RWPE1 (cell line): ENCODE measurements at regions of chr3 and their contacts with region 1.

Region 1: GRCh38 chr3:122322095-122323075 is 2.7 kb upstream of the CSTA start:
- DNase-seq: no peak
- H3K27ac ChIP-seq: no peak overlapping the region
- CTCF ChIP-seq: no peak

Region 2: DNA sequence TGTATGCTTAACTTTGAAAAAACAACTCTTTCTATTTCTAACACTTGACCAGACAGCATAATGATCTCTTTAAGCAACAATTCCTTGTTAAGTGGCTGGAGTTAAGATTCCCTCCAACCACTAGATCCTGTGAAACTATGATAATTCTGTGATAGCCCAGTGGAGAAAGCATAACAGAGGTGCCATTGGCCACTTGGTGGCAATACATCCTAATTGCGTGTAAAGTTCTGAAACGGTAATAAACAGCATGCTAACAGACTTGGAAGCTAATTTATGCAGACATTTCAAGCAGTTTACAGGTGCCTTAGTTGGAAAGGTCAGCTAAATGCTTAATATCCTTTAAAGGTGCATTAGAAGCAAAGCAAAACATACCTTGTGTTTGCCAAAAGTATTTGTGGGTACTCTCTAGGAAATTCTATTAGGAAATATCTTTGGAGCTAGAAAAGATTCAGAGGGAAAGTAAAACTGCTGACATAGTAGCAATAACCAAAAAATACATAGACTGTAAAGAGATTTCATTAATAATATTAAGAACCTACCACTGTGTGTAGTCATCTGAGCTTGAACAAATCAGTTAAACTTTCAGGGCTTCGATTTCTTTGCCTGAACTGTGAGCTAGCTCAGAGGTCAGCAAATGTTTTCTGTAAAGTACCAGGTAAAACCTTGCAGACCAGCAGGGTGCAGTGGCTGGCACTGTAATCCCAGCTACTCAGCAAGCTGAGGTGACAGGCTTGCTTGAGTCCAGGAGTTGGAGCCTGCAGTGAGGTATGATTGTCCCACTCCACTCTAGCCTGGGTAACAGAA is 16.4 kb before region 1 on chr3:
- CTCF ChIA-PET with region 1: interaction called, 12 read pairs
- POLR2A ChIA-PET with region 1: interaction called, 5 read pairs
- DNase-seq: peak; percentile 48
- H3K27ac ChIP-seq: no peak overlapping the region
- CTCF ChIP-seq: peak; percentile 59

Region 3: DNA sequence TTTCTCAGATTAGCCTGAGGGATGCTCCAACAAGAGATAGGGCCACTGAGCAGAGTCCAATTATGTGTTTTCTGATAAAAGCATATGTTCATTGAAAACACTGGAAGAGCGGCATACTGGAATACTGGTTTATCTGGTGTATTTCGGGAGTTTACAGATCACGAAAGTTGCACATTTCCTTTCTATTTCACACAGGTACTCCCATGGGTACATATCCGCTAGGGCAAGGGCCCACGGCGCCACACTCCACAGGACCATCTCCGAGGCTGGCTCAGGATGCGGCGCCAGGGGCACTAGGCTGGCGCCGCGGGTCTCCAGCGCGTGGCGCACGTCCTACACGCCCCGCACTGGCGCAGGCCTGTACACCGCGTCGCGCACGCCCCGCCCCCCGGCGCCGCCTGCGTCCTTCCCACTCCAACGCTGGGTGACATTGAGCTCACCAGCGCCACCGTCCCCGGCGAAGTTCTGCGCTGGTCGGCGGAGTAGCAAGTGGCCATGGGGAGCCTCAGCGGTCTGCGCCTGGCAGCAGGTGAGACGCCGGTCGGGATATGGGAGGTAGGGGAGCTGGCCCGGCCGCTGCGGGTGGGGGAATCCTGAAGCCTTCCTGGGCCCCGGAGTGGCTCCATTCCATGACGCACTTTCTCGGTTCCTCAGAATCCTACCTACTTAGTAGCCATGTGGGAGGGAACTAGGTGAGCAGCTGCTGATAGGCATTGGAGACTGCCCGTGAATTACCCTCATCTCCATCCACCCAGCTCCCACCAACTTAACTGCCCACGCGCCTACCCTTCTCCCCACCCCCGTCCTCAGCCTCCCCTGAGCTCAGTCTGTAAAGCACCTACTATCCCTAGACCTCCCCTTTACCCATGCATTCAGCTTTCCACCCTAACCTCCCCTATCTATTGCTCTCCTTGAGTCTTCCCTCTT is 61.6 kb after region 1 on chr3 and contains the start of gene FAM162A:
- CTCF ChIA-PET with region 1: no interaction called
- POLR2A ChIA-PET with region 1: interaction called, 13 read pairs
- DNase-seq: peak; percentile 83
- H3K27ac ChIP-seq: peak within 1 kb of the TSS; percentile 81
- CTCF ChIP-seq: peak; percentile 72